ENCODE measurements at regions of chr4 and their contacts with region 1.

Region 1: DNA sequence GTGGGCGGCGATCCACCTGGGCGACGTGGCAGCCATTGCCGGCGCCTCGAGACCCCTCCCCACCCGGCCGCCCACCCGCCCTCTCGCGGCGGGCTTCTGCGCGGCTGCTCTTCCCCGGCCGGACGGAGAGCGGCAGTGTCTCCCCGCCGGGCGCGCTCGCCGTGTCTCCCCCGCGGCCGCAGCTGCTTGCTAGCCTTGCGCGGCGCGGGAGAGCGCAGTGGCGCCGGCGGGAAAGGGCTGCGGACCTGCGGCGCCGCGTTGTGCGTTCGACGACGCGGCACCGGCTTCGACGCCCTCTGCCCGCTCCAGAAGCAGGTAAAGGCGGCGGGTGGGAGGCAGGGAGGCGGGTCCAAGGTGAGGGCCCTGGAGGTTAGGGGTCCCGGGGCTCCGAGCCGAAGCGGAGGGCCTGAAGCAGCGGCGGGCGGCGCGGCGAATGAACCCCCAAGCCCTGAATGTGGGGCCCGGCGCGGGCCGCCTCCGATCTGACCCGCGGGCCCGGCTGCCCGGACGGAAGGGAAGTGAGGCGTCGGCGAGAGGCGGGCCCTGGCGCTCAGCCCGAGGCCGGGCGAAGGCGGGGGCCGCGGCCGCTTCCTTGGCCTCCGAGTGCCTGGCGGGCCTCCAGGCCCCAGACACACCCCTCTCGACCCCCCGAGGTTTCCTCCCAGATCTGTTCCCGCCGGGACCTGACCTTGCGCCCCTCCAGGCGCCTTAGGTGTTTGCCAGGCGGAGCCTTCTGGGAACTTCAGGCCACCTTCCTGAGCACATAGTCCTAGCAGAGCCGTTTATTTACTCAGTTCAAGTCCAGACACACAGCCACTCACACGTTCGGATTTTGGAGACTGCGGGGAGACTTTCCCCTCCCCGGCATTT is at the start of gene N4BP2:
- DNase-seq: peak; percentile 93
- H3K4me3 ChIP-seq: peak within 1 kb of the TSS; percentile 71 to 82
- H3K27ac ChIP-seq: peak within 1 kb of the TSS; percentile 97 to 98
- H3K4me1 ChIP-seq: peaks cover 0 to 6% of the 10 kb centered on the region in 2 experiments; a peak in 3 of 4 replicates
- H3K27me3 ChIP-seq: no peaks in the 10 kb centered on the region
- CTCF ChIP-seq: peak; percentile 52
- EP300 ChIP-seq: peak in 1 of 2 experiments; percentile 24; a peak in 1 of 4 replicates
- RAD21 ChIP-seq: peak; percentile 76
- polyA plus RNA-seq, gene N4BP2: 1.2 and 1.4 TPM in 2 replicates

Region 2: DNA sequence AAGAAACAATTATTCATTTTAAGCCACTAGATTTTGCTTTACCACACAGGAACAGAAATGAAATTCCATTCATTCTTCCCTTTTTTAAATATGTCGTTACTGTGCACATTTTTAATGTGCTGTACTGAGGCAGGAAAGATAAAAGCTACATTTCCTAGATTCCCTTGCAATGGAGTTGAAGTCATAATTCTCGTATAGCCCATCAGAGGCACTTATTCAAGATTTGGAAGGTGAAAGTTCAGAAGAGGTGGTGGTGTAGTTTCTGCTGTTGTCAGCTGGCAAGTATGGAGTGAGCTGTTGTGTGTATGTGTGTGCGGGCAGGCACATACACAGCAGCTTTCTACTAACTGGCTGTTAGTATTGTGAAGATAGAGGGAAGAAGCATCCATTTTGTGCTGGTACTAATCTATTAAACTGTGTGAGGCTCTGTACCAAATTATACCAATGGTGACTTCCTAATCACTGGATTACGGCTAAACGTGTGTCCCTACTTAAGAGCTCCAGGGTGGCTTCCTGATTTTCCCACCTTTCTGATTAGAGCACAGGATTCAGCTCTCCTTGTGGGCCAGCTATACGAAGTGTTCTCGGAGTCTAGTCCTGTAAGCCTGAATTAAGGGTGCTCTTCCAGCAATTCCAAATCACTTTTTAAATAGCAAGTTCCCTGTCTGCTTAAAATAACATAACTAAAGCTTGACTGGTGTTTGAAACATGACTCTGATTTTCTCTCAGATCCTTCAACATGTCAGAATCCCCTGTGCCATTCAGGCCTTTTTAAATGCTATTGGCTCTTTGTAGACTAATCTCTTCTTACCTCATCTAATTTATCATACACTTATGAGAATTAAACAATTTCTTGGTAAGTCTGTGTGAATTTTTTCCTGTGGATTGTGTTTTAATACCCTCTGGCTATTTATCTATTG is 123.0 kb before region 1 on chr4:
- CTCF ChIA-PET with region 1: no interaction called
- POLR2A ChIA-PET with region 1: no interaction called
- DNase-seq: no peak
- H3K4me3 ChIP-seq: 0 out of 4 replicates have a peak overlapping the region, but pooled peaks of 1 of the 2 experiments have one; percentile 21
- H3K27ac ChIP-seq: peak overlapping the region; percentile 24 to 57
- H3K4me1 ChIP-seq: peaks cover 4 to 12% of the 10 kb centered on the region in 2 experiments; a peak in 2 of 4 replicates
- H3K27me3 ChIP-seq: no peaks in the 10 kb centered on the region
- CTCF ChIP-seq: no peak
- EP300 ChIP-seq: no peak
- RAD21 ChIP-seq: no peak

Region 3: DNA sequence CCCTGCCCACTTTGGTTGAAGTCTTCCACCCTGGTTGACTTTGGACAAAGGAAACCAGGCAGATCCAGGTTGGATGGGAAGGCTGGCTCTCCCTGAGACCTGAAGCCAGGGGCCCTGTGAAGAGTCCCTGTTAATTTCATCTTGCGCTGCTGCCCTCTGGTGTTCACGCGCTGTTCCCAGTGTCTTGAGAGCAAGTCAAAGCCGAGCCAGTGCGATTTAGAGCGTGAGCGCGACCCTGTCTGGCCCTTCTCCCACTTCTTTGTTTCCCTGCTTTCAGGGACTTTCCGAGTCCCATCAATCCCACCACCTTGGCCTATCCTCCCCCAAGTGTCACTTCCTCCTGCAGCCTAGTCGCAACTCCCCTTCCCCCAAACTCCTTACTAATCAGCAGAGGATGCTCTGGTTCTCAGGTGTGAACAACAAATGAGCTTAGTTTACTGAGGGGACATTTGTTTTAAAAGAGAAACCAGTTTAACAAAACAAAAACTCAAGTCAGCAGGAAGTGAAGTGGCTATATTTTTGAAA is 252.4 kb after region 1 on chr4:
- CTCF ChIA-PET with region 1: interaction called, 54 read pairs
- POLR2A ChIA-PET with region 1: interaction called, 4 read pairs
- DNase-seq: peak; percentile 70
- H3K4me3 ChIP-seq: peak overlapping the region; percentile 13 to 32; a peak in 2 of 4 replicates
- H3K27ac ChIP-seq: no peak overlapping the region
- H3K4me1 ChIP-seq: peaks cover 0 to 2% of the 10 kb centered on the region in 2 experiments; a peak in 1 of 4 replicates
- H3K27me3 ChIP-seq: no peaks in the 10 kb centered on the region
- CTCF ChIP-seq: peak; percentile 90
- EP300 ChIP-seq: no peak
- RAD21 ChIP-seq: peak; percentile 84

Region 4: DNA sequence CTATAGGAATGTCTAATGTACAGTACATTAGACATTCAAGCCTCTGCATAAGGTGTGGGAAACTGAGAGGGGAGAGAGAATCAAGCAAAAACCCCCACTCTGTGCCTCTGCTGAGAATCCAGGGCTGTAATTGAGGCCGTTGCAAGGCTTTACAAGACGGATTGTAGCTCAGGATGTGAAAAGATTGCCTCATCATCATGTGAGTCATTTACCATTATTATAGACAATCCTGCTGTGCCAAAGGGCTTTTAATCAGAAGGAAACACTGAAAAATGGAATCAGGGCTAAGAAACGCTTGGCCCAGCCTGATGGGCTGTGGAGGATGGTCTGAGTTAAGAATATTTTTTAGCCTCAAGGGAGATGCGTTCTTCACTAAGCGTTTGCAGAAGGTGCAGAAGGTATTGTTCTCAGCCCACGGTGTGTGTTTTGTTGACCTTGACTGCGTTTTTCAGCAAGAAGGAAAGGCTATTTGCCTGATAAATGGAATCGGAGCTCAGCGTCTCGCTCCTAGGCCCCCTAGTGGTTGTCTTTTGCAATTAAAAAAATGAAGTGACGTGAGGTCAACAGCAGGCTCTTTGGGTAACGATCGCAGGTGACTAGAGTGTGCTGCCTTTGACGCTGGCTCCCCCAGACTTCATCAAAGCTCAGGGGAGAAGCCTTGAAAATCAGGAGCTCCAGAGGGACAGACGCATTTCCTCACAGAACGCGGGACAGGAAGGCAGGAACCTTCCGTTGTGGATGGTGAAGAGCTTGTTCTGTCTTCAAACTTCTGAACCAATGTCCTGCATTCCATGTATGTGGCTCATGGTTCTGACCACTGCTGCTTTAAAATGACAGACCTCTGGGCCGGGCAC is 260.1 kb after region 1 on chr4:
- CTCF ChIA-PET with region 1: interaction called, 54 read pairs
- POLR2A ChIA-PET with region 1: interaction called, 21 read pairs
- DNase-seq: peak; percentile 57
- H3K4me3 ChIP-seq: peak overlapping the region; percentile 34 to 63
- H3K27ac ChIP-seq: peak overlapping the region; percentile 93 to 100
- H3K4me1 ChIP-seq: peaks cover 13 to 16% of the 10 kb centered on the region in 2 experiments
- H3K27me3 ChIP-seq: no peaks in the 10 kb centered on the region
- CTCF ChIP-seq: peak; percentile 84
- EP300 ChIP-seq: 0 out of 4 replicates have a peak, but pooled peaks of 1 of the 2 experiments have one; percentile 31
- RAD21 ChIP-seq: peak; percentile 63

Region 5: DNA sequence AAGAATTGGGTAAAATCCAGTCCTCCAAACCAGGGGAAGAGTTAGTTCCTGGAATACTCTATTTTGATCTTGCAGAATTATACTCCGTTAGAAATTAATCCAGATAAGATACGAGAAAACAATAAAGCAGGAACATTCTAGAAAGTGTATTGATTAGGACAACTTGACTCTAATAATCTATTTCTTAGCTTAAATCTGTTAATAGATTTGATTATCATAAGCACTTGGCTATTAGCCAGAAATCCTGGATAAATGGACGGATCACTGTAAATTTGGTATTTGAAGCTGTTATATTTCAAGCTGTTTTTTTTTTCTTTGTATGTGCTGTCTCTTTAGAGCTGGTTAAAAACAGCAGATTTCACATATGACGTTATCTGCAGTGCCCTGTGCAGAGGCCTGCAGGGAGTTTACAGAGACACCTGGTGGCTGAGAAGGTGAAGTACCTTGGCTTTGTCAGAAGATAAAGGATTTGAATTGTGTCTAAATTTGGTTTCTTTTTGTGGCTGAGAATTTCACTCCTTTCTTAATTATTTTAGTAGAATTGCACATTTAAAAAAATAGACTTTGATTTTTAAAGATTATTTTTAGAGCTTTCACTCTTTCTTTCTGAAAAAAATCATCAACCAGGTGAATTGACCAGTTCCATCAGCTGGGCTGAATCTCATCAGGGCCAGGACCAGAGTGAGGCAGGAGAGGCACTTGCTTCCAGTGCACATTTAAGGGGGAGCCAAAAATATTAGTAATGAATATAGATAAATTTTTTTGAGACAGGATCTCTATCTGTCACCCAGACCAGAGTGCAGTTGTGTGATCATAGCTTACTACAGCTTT is 268.5 kb after region 1 on chr4:
- CTCF ChIA-PET with region 1: interaction called, 17 read pairs
- POLR2A ChIA-PET with region 1: interaction called, 16 read pairs
- DNase-seq: peak; percentile 67
- H3K4me3 ChIP-seq: no peak overlapping the region
- H3K27ac ChIP-seq: peak overlapping the region in 1 of 2 experiments; percentile 9; a peak in 1 of 4 replicates
- H3K4me1 ChIP-seq: peaks cover 13% of the 10 kb centered on the region in 2 experiments; a peak in 3 of 4 replicates
- H3K27me3 ChIP-seq: no peaks in the 10 kb centered on the region
- CTCF ChIP-seq: peak; percentile 91
- EP300 ChIP-seq: peak in 1 of 2 experiments; percentile 17; a peak in 1 of 4 replicates
- RAD21 ChIP-seq: peak; percentile 85

Measured in SK-N-SH (cell line).